ENCODE measurements at regions of chr11 and their contacts with region 1.

Region 1: DNA sequence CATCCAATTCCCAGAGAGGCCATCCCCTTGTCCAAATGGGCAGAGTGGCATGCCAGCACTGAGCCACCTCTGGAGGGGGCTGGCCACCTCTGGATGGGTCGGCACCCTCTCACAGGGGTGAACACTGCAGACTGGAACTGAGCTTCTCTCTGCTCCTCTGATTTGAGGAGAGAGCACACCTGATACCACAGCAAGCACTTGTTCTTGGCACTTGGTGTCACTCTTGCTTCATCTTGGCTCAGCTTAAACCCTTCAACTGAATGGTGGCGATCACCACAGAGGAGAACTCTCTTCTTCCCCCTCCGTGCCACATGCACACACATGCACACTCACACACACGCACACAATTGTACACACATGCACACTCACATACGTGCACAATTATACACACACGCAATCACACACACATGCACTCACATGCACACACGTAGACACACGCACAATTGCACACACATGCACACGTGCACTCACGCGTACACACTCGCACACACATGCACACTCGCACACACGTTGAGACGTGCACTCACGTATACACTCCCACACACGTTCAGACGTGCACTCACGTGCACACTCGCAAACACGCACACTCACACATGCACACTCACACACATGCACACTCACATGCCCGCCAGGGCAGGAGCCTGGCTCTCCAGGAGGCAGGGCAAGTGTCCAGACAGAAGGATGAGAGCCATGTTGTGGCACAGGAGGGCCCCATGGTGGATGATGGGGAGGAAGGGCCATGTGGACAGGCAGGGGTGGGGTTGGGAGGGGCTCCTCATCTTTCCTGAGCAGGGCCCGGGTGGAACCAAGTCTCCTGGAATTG is 23.4 kb downstream of the OVOL1 start:
- DNase-seq: no peak
- ATAC-seq: peak; percentile 55
- H3K4me3 ChIP-seq: no peak overlapping the region
- H3K27ac ChIP-seq: no peak overlapping the region
- H3K4me1 ChIP-seq: no peaks in the 10 kb centered on the region
- H3K27me3 ChIP-seq: no peaks in the 10 kb centered on the region
- CTCF ChIP-seq: no peak

Region 2: GRCh38 chr11:65743928-65744698 is 66.1 kb before region 1 on chr11:
- CTCF ChIA-PET with region 1: interaction called, 15 read pairs
- POLR2A ChIA-PET with region 1: no interaction called
- in situ Hi-C with region 1: no loop called
- intact Hi-C with region 1: no loop called
- DNase-seq: no peak
- ATAC-seq: peak; percentile 95
- H3K4me3 ChIP-seq: peak overlapping the region in 1 of 2 experiments; percentile 26; a peak in 2 of 4 replicates
- H3K27ac ChIP-seq: no peak overlapping the region
- H3K4me1 ChIP-seq: 0 out of 2 replicates have a peak, but pooled peaks cover 7% of the 10 kb centered on the region
- H3K27me3 ChIP-seq: peaks cover 5% of the 10 kb centered on the region; the same call in 1 of the 2 replicates
- CTCF ChIP-seq: peak; percentile 89

Region 3: DNA sequence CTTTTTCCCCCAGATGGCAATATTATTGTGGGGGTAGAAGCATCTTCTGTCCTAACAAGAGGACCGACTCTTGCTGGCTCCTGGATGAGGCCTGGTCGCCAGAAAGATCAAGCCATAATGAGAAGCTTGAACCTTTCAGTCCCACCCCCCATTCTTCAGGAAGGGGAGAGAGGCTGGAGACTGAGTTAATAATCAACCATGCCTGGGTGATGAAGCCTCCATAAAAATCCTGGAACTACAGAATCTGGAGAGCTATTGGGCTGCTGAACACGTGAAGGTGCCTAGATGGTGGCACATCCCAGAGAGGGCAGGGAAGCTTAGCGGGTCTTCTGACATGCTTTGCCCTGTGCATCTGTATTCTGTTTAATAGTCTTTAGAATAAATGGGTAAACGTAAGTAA is 45.8 kb before region 1 on chr11:
- CTCF ChIA-PET with region 1: no interaction called
- POLR2A ChIA-PET with region 1: no interaction called
- in situ Hi-C with region 1: loop called (anchors 5 kb)
- intact Hi-C with region 1: no loop called
- DNase-seq: no peak
- ATAC-seq: peak; percentile 26; the same call in 1 of the 2 replicates
- H3K4me3 ChIP-seq: no peak overlapping the region
- H3K27ac ChIP-seq: no peak overlapping the region
- H3K4me1 ChIP-seq: no peaks in the 10 kb centered on the region
- H3K27me3 ChIP-seq: no peaks in the 10 kb centered on the region
- CTCF ChIP-seq: no peak

Region 4: DNA sequence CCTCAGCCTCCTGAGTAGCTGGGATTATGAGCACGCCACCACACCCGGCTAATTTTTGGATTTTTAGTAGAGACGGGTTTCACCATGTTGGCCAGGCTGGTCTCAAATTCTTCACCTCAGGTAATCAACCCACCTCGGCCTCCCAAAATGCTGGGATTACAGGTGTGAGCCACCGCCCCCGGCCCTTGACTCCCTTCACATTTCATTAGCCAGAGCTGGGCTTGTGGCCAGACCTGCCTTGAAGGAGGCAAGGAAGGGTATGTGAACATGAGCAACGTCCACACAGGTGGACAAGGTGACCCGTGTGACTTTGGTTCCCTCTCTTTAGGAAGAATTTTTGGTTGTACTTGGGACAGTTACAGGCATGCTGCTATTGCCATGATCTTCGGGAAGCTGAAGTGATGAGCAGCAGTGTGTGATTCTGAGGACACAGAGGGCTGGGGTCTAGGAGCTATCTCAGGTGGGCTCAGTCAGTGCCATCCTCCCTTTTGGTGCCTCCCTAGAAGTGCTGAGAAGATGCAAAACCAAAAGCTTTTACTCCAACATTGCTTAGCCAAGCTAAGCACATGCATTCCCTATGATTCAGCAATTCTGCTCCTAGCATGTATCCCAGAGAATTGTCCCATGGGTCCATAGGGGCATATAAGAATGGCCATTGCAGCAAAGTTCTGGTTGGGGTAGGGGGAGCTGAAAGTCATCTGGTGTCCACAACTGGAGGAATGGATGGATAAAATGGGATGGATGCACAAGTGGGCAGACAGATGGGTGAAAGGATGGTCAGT is 35.5 kb before region 1 on chr11:
- CTCF ChIA-PET with region 1: no interaction called
- POLR2A ChIA-PET with region 1: no interaction called
- in situ Hi-C with region 1: no loop called
- intact Hi-C with region 1: no loop called
- DNase-seq: no peak
- ATAC-seq: no peak
- H3K4me3 ChIP-seq: no peak overlapping the region
- H3K27ac ChIP-seq: no peak overlapping the region
- H3K4me1 ChIP-seq: peaks cover 9% of the 10 kb centered on the region
- H3K27me3 ChIP-seq: no peaks in the 10 kb centered on the region
- CTCF ChIP-seq: no peak

Region 5: GRCh38 chr11:65787645-65788622 is 22.3 kb before region 1 on chr11:
- CTCF ChIA-PET with region 1: interaction called, 12 read pairs
- POLR2A ChIA-PET with region 1: interaction called, 15 read pairs
- in situ Hi-C with region 1: no loop called
- intact Hi-C with region 1: loop called (anchors 5 kb)
- DNase-seq: no peak
- ATAC-seq: no peak
- H3K4me3 ChIP-seq: peak overlapping the region; percentile 24 to 38
- H3K27ac ChIP-seq: no peak overlapping the region
- H3K4me1 ChIP-seq: peaks cover 11% of the 10 kb centered on the region; the same call in 1 of the 2 replicates
- H3K27me3 ChIP-seq: peaks cover 6% of the 10 kb centered on the region; the same call in 1 of the 2 replicates
- CTCF ChIP-seq: no peak

Measured in Panc1 (cell line).